ENCODE measurements at regions of chr1 and their contacts with region 1.

Region 1: DNA sequence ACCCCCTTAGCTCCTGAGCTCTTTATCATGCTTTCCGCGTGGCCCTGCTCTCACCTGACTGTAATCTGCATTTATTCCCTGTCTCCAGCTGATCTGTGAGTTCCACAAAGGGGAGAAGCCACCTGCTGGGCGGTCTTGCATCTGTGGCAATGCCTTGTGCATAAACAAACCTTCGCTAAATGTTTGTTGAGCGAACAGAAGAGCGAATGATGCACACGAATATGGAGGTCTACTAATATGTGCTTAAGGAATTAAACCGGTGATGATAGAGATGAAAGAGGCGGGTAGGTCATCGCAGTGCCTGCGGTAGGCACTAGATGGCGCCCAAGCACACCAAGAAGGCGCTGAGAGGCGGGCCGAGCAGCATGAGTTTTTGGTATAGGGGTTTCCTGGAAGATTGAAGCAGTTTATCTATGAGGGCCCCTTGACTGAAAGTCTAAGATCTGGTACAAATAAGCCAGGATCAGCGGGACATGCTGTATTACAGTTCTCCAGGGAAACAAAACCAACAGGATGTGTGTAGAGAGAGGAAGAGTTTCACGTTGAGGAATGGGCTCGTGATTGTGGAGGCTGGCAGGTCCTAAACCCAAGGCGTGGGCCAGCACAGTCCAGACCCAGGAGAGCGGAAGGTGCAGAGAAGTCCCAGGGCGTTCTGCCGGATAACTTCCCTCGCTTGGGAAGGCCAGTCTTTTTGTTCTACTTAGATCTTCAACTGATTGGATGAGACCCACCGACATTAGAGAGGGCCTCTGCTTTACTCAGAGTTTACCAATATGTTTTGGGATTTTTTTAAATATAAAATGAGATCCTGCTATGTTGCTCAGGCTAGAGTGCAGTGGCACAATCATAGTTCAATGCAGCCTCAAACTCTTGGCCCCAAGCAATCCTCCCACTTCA is 34.7 kb downstream of the TOMM20 start:
- DNase-seq: peak; percentile 68 to 80 (median 72)
- ATAC-seq: peak; percentile 88 to 95 (median 92)
- H3K4me3 ChIP-seq: no peak overlapping the region
- H3K27ac ChIP-seq: no peak overlapping the region
- H3K4me1 ChIP-seq: peaks cover 0 to 7% (median 3%) of the 10 kb centered on the region in 4 donors
- H3K27me3 ChIP-seq: no peaks in the 10 kb centered on the region
- CTCF ChIP-seq: peak; percentile 69 to 95 (median 88)
- POLR2A ChIP-seq: no peak

Region 2: GRCh38 chr1:234486498-234487448 is 607.2 kb before region 1 on chr1:
- intact Hi-C with region 1: loop called in 1 of 2 experiments (anchors 5 kb)
- DNase-seq: peak in 1 of 3 donors; percentile 55
- ATAC-seq: peak; percentile 91 to 96 (median 93)
- H3K4me3 ChIP-seq: no peak overlapping the region
- H3K27ac ChIP-seq: no peak overlapping the region
- H3K4me1 ChIP-seq: no peaks in the 10 kb centered on the region
- H3K27me3 ChIP-seq: no peaks in the 10 kb centered on the region
- CTCF ChIP-seq: peak; percentile 76 to 83 (median 80)
- POLR2A ChIP-seq: no peak